ENCODE measurements at regions of chr17 and their contacts with region 1.

Region 1: GRCh38 chr17:77462101-77462500 is 321.3 kb downstream of the SEC14L1 start:
- DNase-seq: peak; percentile 82
- ATAC-seq: peak; percentile 42
- H3K4me3 Mint-ChIP-seq: peak overlapping the region; percentile 86
- H3K27ac Mint-ChIP-seq: peak overlapping the region; percentile 99
- H3K4me1 Mint-ChIP-seq: peaks cover 90% of the 10 kb centered on the region
- H3K27me3 Mint-ChIP-seq: no peaks in the 10 kb centered on the region

Region 2: DNA sequence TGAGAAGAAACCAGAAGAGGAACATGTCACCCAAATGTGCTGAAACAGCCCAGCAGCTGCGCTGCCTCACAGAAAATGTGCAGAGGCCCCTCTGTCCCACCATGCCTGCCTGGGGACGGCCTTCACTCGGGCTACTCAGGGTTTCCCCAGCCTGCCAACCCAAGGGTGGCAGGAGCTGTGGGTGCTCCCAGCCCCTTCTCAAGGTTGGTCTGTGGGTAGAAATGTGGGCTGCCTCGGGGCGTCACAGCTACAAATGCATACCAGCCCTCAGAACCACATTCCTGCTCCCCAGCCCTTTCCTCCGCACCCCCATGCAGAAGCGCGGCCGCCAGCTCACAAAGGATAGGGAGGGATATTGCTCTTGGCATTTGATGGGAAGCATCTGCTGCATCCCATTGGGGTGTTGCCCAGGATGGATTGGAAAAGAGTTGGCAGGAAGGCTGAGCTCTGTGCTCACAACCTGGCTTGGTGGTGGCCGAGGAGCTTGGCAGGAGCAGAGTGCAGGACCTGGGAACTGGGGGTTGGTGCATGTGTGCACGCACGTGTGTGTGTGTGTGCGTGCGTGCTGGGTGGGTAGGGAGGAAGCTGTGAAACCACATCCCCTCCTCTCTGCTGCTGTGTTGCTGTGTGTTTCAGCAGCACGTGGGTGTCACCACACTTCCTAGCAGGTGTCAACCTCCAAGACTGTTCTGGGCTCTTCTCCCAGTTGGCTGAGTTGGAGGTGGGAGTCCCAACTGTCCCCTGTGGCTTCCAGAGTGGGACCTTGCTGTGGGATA is 16.9 kb before region 1 on chr17:
- CTCF ChIA-PET with region 1: interaction called, 10 read pairs
- DNase-seq: peak; percentile 95
- ATAC-seq: peak; percentile 62
- H3K4me3 Mint-ChIP-seq: peak overlapping the region; percentile 73
- H3K27ac Mint-ChIP-seq: peak overlapping the region; percentile 93
- H3K4me1 Mint-ChIP-seq: peaks cover 93% of the 10 kb centered on the region
- H3K27me3 Mint-ChIP-seq: no peaks in the 10 kb centered on the region

Region 3: GRCh38 chr17:77571155-77571981 is 109.3 kb after region 1 on chr17:
- CTCF ChIA-PET with region 1: no interaction called
- DNase-seq: no peak
- ATAC-seq: no peak
- H3K4me3 Mint-ChIP-seq: no peak overlapping the region
- H3K27ac Mint-ChIP-seq: no peak overlapping the region
- H3K4me1 Mint-ChIP-seq: peaks cover 6% of the 10 kb centered on the region
- H3K27me3 Mint-ChIP-seq: peaks cover 63% of the 10 kb centered on the region